ENCODE measurements at regions of chr2 and their contacts with region 1.

Region 1: DNA sequence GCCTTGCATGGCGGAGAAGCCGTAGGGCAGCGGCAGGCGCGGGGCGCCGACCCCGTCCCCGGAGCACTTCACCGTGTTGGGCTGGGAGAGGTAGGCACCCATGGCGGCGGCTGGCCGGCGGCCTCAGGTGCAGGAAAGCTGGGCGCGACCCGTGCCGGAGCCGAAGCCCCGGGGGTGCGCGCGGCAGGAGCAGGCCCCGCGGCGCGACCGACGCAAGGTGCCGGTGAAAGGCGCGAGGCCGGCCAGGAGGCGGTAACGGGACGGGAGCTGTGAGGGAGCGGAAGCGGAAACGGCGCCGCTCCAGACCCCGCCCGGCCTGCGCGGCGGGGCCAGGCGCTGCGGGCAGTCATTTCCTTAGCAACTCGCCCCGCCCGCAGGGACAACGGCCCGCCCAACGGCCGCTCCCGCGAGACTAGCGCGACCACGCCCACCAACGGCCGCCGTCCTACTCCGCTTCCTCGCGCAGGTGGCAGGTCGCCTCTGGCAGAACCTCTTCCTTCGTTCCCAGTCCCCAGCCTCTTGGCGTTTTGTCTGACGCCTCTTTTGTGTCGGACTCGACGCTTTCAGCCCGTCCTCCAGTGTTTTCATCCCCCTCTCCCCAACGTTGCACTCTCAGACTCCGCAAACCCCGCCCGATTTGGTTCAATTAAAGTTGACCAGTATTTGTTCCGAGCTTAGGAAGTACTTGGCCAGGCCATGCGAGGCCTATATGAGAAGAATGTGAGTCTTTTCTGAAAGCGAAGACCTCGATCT is at the start of gene PPM1G:
- DNase-seq: peak; percentile 98
- ATAC-seq: peak; percentile 96
- H3K4me3 Mint-ChIP-seq: peak within 1 kb of the TSS; percentile 84
- H3K27ac Mint-ChIP-seq: peak within 1 kb of the TSS; percentile 88
- H3K4me1 Mint-ChIP-seq: peaks cover 35% of the 10 kb centered on the region
- H3K27me3 Mint-ChIP-seq: no peaks in the 10 kb centered on the region
- total RNA-seq, gene PPM1G: 115 to 121 TPM

Region 2: DNA sequence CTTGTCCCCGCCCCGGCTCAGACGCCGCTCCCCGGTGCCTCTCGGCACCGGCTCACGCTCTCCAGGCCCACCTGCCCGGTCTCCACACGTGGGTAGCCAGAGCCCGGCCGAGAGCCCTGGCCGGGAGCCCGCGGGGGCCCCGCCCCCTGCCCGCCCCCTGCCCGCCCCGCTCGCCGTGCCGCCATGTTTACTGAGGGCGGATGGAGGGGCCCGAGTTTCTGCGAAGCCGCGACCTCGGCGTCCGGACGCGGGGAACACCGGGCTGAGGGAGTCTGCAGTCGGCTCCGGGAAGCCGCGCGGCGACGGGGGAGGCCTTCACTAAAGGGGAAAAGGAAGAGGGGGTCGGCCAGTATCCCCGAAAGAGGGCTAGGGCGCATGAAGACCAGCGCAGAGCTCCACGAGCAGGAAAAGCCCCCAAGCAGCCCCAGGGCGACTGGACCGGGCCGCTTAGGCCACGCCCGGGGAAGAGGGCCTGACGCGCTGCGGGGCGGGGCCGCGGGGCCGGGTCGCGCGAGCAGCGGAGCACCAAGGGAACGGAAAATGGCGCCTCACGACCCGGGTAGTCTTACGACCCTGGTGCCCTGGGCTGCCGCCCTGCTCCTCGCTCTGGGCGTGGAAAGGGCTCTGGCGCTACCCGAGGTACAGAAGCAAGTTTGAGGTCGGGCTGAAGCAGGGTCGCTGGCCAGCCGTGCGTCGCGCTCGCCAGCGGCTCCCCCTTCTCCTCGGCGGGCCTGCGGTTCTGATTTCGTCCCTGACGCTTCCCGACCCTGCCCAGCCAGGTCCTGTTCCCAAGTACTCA is 197.5 kb before region 1 on chr2 and contains the starts of genes ATRAID and SLC5A6:
- CTCF ChIA-PET with region 1: no interaction called
- POLR2A ChIA-PET with region 1: no interaction called
- intact Hi-C with region 1: loop called in 1 of 2 experiments (anchors 1 kb)
- DNase-seq: peak; percentile 93
- ATAC-seq: peak; percentile 90
- H3K4me3 Mint-ChIP-seq: peak within 1 kb of the TSS; percentile 99
- H3K27ac Mint-ChIP-seq: peak within 1 kb of the TSS; percentile 100
- H3K4me1 Mint-ChIP-seq: peaks cover 34% of the 10 kb centered on the region
- H3K27me3 Mint-ChIP-seq: no peaks in the 10 kb centered on the region
- total RNA-seq, gene ATRAID: 69.9 to 83.4 TPM
- total RNA-seq, gene SLC5A6: 27.3 to 34.9 TPM

Region 3: GRCh38 chr2:27370026-27370815 is 39.3 kb before region 1 on chr2 and contains the starts of genes EIF2B4 and SNX17:
- CTCF ChIA-PET with region 1: interaction called, 5 read pairs
- POLR2A ChIA-PET with region 1: interaction called, 3 read pairs
- intact Hi-C with region 1: loop called (anchors 1 to 2 kb)
- DNase-seq: peak; percentile 99
- ATAC-seq: peak; percentile 95
- H3K4me3 Mint-ChIP-seq: peak within 1 kb of the TSS; percentile 90
- H3K27ac Mint-ChIP-seq: peak within 1 kb of the TSS; percentile 95
- H3K4me1 Mint-ChIP-seq: peaks cover 39% of the 10 kb centered on the region
- H3K27me3 Mint-ChIP-seq: no peaks in the 10 kb centered on the region
- total RNA-seq, gene EIF2B4: 31.0 to 39.2 TPM
- total RNA-seq, gene SNX17: 63.9 to 82.1 TPM

Region 4: GRCh38 chr2:27441958-27442919 is 32.7 kb after region 1 on chr2 and contains the start of gene KRTCAP3:
- CTCF ChIA-PET with region 1: no interaction called
- POLR2A ChIA-PET with region 1: no interaction called
- intact Hi-C with region 1: loop called in 1 of 2 experiments (anchors 1 kb)
- DNase-seq: peak; percentile 75
- ATAC-seq: peak; percentile 80
- H3K4me3 Mint-ChIP-seq: no peak within 1 kb of the TSS
- H3K27ac Mint-ChIP-seq: no peak within 1 kb of the TSS
- H3K4me1 Mint-ChIP-seq: peaks cover 6% of the 10 kb centered on the region
- H3K27me3 Mint-ChIP-seq: no peaks in the 10 kb centered on the region
- total RNA-seq, gene KRTCAP3: 4.7 to 5.9 TPM

Region 5: GRCh38 chr2:27628767-27629709 is 219.5 kb after region 1 on chr2 and contains the starts of genes CCDC121 and GPN1:
- CTCF ChIA-PET with region 1: no interaction called
- POLR2A ChIA-PET with region 1: no interaction called
- intact Hi-C with region 1: loop called in 1 of 2 experiments (anchors 1 kb)
- DNase-seq: peak; percentile 98
- ATAC-seq: peak; percentile 96
- H3K4me3 Mint-ChIP-seq: no peak within 1 kb of the TSS
- H3K27ac Mint-ChIP-seq: no peak within 1 kb of the TSS
- H3K4me1 Mint-ChIP-seq: peaks cover 37% of the 10 kb centered on the region
- H3K27me3 Mint-ChIP-seq: no peaks in the 10 kb centered on the region
- total RNA-seq, gene CCDC121: 0.11 to 0.44 TPM
- total RNA-seq, gene GPN1: 45.6 to 63.9 TPM

Region 6: GRCh38 chr2:27683390-27684071 is 274.0 kb after region 1 on chr2:
- CTCF ChIA-PET with region 1: interaction called, 18 read pairs
- POLR2A ChIA-PET with region 1: interaction called, 3 read pairs
- intact Hi-C with region 1: loop called in 1 of 2 experiments (anchors 1 kb)
- DNase-seq: peak; percentile 93
- ATAC-seq: peak; percentile 73
- H3K4me3 Mint-ChIP-seq: no peak overlapping the region
- H3K27ac Mint-ChIP-seq: peak overlapping the region; percentile 92
- H3K4me1 Mint-ChIP-seq: peaks cover 31% of the 10 kb centered on the region
- H3K27me3 Mint-ChIP-seq: no peaks in the 10 kb centered on the region

Measured in activated CD4-positive, alpha-beta T cell treated with anti-CD3 and anti-CD28 coated beads for 36 hours (primary cell).